ENCODE measurements at regions of chr7 and their contacts with region 1.

Region 1: DNA sequence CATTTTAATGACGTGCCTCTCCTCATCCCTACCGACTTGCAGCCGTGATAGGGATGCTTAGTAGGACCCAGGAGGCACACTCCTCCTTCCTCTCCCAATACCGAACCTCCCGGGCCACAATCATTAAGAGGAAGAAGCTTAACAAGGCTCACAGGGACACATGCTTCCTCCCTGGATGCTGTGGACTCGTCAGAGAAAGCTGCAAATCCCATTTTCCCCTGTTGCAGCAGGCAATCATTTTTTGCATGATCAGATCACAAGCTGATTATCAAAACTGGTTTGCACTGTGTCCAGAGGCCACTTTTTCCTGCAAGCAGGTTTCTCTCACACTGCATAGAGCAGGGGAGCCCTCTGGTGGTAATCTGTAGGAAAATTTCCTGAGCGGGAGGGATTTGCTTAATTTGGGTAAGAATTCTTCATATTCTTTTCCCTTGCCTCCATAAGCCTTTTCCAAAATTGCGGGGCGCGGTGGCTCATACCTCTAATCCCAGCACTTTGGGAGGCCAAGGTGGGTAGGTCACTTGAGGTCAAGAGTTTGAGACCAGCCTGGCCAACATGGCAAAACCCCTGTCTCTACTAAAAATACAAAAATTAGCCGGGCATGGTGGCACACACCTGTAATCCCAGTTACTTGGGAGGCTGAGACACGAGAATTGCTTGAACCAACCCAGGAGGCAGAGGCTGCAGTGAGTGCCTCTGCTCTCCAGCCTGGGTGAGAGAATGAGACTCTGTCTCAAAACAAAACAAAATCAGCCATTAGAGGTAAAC is 16.1 kb upstream of the LAMB4 start:
- DNase-seq: no peak
- H3K4me3 ChIP-seq: peak overlapping the region in 2 of 4 donors; percentile 3 to 37
- H3K27ac ChIP-seq: no peak overlapping the region
- H3K4me1 ChIP-seq: peaks cover 3 to 18% (median 6%) of the 10 kb centered on the region in 3 donors
- H3K27me3 ChIP-seq: peaks cover 0 to 3% (median 0%) of the 10 kb centered on the region in 4 donors
- CTCF ChIP-seq: peak; percentile 80 to 92 (median 88)
- POLR2A ChIP-seq: no peak

Region 2: DNA sequence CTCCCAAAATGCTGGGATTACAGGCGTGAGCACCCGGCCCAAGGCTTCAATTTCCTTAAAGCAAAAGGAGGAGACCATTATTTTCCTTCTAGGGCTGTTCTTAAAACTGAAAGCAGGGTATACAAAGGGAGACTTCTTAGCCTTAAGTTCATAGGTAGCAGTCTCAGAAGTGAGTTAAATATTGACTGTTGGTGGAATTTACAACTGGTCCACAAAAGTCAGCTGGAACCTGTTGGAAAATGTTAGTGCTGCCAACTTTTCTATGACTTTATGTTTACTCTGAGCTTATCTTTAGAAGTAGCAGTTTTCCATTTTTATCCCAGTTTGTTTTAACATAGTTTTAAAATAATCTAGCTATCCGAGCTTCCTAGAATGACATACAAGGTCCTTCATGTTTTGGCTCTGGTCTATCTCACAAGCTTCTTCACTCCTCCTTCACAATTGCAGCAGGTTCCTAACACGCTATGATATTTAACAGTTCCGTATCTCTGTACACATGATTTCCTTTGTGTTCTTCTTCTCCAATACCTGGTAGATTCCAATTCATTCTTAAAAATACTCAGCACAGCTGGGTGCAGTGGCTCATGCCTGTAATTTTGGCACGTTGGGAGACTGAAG is 346.5 kb before region 1 on chr7:
- intact Hi-C with region 1: no loop called
- DNase-seq: no peak
- H3K4me3 ChIP-seq: no peak overlapping the region
- H3K27ac ChIP-seq: no peak overlapping the region
- H3K4me1 ChIP-seq: no peaks in the 10 kb centered on the region
- H3K27me3 ChIP-seq: peaks cover 0 to 2% (median 0%) of the 10 kb centered on the region in 4 donors
- CTCF ChIP-seq: no peak
- POLR2A ChIP-seq: no peak

Region 3: GRCh38 chr7:108079648-108080591 is 66.3 kb before region 1 on chr7:
- intact Hi-C with region 1: no loop called
- DNase-seq: no peak
- H3K4me3 ChIP-seq: no peak overlapping the region
- H3K27ac ChIP-seq: peak overlapping the region in 1 of 4 donors; percentile 49
- H3K4me1 ChIP-seq: peaks cover 0 to 29% (median 15%) of the 10 kb centered on the region in 3 donors
- H3K27me3 ChIP-seq: no peaks in the 10 kb centered on the region
- CTCF ChIP-seq: no peak
- POLR2A ChIP-seq: no peak

Region 4: DNA sequence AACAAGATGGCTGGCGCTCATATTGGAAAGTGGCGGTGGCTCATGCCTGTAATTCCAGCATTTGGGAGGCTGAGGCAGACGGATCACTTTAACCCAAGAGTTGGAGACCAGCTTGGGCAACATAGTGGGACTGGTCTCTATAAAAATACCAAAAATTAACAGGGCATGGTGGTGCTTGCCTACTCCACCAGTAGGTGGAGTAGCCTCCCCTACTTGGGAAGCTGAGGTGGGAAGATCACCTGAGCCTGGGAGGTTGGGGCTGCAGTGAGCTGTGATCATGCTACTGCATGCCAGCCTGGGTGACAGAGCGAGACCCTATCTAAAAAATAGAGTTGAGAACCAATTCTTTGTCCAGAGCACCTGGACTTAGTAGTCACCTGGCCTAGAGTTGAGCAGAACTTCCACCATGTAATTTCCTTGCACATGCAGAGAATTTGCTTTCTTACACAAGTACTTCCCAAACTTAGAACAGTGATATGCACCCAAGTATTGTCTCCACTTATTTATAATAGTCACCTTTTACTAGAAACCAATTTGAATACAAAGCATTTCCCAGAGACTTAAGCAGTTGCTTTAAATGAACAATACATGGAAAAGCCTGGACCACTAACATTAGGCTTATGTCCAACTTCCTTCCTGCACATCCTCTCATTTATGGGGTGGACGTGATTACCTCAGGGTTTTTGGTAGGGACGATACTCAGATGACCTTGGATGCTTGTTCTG is 32.0 kb before region 1 on chr7:
- intact Hi-C with region 1: loop called (anchors 2 kb)
- DNase-seq: no peak
- H3K4me3 ChIP-seq: no peak overlapping the region
- H3K27ac ChIP-seq: no peak overlapping the region
- H3K4me1 ChIP-seq: peaks cover 0 to 7% (median 0%) of the 10 kb centered on the region in 3 donors
- H3K27me3 ChIP-seq: no peaks in the 10 kb centered on the region
- CTCF ChIP-seq: peak; percentile 33 to 83 (median 58)
- POLR2A ChIP-seq: no peak

Region 5: GRCh38 chr7:108235451-108236061 is 89.3 kb after region 1 on chr7:
- intact Hi-C with region 1: no loop called
- DNase-seq: no peak
- H3K4me3 ChIP-seq: no peak overlapping the region
- H3K27ac ChIP-seq: no peak overlapping the region
- H3K4me1 ChIP-seq: peaks cover 0 to 4% (median 0%) of the 10 kb centered on the region in 3 donors
- H3K27me3 ChIP-seq: no peaks in the 10 kb centered on the region
- CTCF ChIP-seq: no peak
- POLR2A ChIP-seq: no peak

Region 6: DNA sequence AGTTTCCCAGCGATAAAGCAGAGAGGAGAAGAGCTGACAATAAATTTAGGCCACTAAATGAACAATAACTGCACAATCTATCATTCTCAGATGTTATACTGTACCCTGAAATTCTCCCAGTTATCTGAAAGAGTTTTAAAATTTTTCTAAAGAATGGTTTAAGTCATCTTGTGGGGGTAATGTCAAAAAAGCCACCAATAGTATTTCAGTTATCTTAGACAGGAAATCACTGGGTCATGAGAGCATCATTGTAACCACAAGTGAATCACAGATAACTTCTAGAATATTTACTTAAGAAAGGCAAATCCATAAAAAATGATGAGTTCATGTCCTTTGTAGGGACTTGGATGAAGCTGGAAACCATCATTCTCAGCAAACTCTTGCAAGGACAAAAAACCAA is 570.5 kb after region 1 on chr7:
- intact Hi-C with region 1: no loop called
- DNase-seq: no peak
- H3K4me3 ChIP-seq: no peak overlapping the region
- H3K27ac ChIP-seq: no peak overlapping the region
- H3K4me1 ChIP-seq: no peaks in the 10 kb centered on the region
- H3K27me3 ChIP-seq: no peaks in the 10 kb centered on the region
- CTCF ChIP-seq: no peak
- POLR2A ChIP-seq: no peak

Measured in esophagus squamous epithelium (tissue), 5 donors.